ENCODE measurements at regions of chr1 and their contacts with region 1.

Region 1: DNA sequence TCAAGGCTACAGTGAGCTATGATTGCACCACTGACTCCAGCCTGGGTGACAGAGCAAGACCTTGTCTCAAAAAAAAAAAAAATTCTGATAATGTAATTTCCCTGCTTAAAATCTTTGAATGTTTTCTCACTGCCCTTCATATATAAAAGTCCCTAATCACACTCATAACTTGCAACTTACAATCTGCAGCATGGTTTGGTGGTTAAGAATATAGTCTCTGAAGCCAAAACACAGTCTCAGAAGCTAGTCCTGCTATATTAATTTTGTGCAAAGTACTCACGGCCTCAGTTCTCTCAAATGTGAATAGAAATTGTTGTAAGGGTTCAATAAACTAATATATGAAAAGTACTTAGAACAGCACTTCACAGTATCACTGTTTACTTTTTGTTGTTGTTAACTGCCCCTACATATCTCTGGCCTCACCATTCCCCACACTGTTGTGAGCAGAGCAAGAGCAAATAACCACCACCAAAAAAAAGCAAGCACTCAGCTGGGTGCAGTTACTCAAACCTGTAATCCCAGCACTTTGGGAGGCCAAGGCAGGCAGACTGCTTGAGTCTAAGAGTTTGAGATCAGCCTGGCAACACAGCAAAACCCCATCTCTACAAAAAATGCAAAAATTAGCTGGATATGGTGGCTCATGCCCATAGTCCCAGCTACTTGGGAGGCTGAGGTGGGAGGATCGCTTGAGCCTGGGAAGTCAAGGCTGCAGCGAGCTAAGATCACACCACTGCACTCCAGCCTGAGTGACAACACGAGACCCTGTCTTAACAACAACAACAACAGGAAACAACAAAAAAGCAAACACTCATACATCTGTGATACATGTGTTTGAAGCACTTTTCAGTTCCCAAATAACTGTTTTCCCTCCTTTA is 22.4 kb downstream of the ASH1L start:
- DNase-seq: no peak
- ATAC-seq: no peak
- H3K4me3 Mint-ChIP-seq: no peak overlapping the region
- H3K27ac Mint-ChIP-seq: peak overlapping the region; percentile 24
- H3K4me1 Mint-ChIP-seq: peaks cover 31% of the 10 kb centered on the region
- H3K27me3 Mint-ChIP-seq: no peaks in the 10 kb centered on the region

Region 2: DNA sequence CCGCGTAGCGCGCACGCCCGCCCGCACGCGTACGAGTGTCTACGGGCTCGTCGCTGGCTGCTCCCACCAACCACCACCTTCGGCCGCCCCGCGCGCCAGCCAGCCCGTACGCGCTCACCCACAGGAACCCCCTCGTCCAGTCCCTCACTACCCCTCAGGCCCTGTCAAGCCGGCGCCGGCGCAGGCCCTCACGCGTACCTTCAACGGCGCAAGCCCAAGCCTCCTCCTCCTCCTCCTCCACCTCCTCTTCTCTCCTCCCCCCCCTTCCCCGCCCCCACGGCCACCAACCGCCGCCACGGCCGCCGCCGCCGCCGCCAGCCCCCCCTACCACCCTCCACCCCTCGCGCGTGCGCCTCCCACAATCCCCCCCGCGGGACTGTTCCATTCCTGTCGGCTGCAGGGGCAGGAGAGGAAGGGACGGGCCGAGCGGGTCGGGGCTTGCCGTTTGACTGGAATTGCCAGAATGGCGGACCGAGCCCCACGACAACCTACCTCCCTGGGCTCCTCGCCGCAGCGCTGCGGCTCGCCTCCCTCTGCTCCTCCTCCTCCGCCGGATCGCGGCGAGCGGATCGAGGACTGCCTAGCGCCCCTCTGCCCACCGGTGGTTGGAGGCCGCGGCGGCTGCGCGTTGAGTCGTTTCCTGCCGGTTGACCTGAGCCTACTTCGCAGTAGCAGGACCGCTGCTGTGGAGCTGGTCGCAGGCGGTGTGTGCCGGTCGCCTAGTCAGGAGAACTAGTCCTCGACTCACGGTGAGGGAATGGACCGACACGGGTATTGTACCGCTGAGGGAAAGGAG is 22.5 kb after region 1 on chr1 and contains the start of gene ASH1L:
- POLR2A ChIA-PET with region 1: interaction called, 12 read pairs
- DNase-seq: peak; percentile 91
- ATAC-seq: peak; percentile 82
- H3K4me3 Mint-ChIP-seq: peak within 1 kb of the TSS; percentile 99
- H3K27ac Mint-ChIP-seq: peak within 1 kb of the TSS; percentile 98
- H3K4me1 Mint-ChIP-seq: peaks cover 27% of the 10 kb centered on the region
- H3K27me3 Mint-ChIP-seq: no peaks in the 10 kb centered on the region
- total RNA-seq, gene ASH1L: 57.8 to 62.3 TPM

Region 3: DNA sequence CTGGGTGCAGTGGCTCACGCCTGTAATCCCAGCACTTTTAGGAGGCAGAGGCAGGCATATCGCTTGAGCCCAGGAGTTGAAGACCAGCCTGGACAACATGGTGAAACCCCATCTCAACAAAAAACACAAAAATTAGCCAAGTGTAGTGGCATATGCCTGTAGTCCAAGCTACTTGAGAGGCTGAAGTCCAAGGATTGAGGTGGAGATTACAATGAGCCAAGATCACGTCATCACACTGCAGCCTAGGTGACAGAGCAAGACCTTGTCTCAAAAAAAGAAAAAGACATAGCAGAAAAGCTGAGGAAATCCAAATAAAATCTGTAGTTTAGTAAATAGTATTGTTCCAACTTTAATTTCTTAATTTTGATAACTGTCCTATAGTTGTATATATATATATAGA is 33.8 kb after region 1 on chr1:
- POLR2A ChIA-PET with region 1: no interaction called
- DNase-seq: no peak
- ATAC-seq: no peak
- H3K4me3 Mint-ChIP-seq: no peak overlapping the region
- H3K27ac Mint-ChIP-seq: no peak overlapping the region
- H3K4me1 Mint-ChIP-seq: peaks cover 1% of the 10 kb centered on the region
- H3K27me3 Mint-ChIP-seq: no peaks in the 10 kb centered on the region

Measured in activated naive CD8-positive, alpha-beta T cell treated with anti-CD3 and anti-CD28 coated beads, Interleukin-2, amount 10 ng/mL, durations not matched to agents 7 days and 5 days (primary cell).